ENCODE measurements at regions of chr14 and their contacts with region 1.

Region 1: DNA sequence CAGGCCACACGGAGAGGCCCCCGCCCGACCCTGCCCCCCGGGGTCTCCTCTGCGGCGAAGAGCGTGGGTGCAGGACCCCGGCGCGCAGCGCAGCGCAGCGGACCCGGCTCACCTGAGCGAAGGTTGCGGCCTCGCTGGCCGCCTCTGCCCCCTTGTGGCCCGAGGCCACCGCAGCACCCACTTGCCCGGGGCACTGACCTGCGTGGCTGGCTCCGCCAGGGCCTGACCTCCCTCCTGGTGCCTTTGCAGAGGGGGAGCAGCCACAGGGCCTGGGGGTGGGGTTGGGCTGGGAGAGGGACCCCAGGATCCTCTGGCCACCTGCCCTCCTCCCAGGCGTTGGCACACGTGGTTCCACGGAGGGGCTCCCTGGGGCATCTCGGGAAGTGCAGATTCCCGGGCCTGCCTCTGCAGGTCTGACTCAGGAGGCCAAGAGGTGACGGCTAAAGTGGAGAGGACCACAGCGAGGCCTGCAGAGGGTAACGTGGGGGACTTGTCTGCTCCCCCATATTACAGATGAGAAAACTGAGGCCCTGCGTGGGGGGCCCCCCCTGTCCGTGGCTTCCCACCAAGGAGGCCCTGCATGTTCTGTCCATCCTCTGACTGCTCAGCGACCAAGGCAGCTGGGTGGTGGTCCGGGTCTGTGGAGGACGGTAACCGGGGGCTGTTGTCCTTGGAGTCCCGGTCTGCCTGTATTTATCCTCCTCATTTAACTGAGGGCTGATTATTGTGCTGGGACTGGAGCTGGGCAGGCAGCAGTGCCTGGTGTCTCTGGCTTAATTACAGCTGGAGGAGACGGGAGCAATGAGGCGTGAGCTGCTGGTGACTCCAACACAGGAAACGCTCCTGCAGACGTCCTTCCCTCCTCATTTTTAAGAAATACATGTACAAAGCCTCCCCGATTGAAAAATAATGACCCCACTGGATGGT is 67.9 kb upstream of the BEGAIN start:
- DNase-seq: no peak
- H3K4me3 ChIP-seq: no peak overlapping the region
- CTCF ChIP-seq: peak; percentile 73

Region 2: GRCh38 chr14:100428727-100429126 is 226.3 kb before region 1 on chr14:
- CTCF ChIA-PET with region 1: interaction called, 52 read pairs
- POLR2A ChIA-PET with region 1: no interaction called
- DNase-seq: peak; percentile 46
- H3K4me3 ChIP-seq: no peak overlapping the region
- CTCF ChIP-seq: no peak

Region 3: GRCh38 chr14:100440187-100440631 is 214.9 kb before region 1 on chr14:
- CTCF ChIA-PET with region 1: interaction called, 15 read pairs
- POLR2A ChIA-PET with region 1: no interaction called
- DNase-seq: no peak
- H3K4me3 ChIP-seq: no peak overlapping the region
- CTCF ChIP-seq: peak; percentile 73